ENCODE measurements at regions of chr10 and their contacts with region 1.

Region 1: DNA sequence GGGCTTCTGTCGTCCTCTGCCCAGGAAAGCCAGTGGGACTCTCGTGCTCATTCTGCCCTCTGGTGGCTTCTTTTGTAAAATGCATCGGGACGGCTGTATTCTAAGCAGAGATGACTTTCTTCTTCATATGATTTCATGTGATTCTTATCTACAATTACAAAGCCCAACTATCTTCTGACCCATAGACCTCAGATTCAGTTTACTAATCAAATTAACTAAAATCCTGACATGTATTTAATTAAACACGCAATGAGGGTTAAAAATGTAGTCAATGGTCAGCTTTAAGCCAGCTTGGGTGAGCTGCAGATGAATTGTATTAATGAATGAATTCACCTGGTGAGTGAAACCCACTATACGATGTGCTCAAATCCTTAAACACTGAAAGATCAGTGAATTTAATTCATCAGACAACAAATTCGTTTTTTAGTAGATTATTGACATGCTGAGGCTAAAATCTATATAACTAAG is 117.6 kb upstream of the FAM204A start:
- DNase-seq: peak; percentile 67
- H3K4me3 ChIP-seq: peak overlapping the region in 1 of 4 donors; percentile 23
- H3K27ac ChIP-seq: peak overlapping the region in 3 of 4 donors; percentile 20 to 59 (median 29)
- H3K4me1 ChIP-seq: peaks cover 0 to 16% (median 11%) of the 10 kb centered on the region in 4 donors
- H3K27me3 ChIP-seq: peaks cover 10% of the 10 kb centered on the region
- CTCF ChIP-seq: peak; percentile 65 to 80 (median 72)
- EP300 ChIP-seq: no peak
- POLR2A ChIP-seq: no peak

Region 2: DNA sequence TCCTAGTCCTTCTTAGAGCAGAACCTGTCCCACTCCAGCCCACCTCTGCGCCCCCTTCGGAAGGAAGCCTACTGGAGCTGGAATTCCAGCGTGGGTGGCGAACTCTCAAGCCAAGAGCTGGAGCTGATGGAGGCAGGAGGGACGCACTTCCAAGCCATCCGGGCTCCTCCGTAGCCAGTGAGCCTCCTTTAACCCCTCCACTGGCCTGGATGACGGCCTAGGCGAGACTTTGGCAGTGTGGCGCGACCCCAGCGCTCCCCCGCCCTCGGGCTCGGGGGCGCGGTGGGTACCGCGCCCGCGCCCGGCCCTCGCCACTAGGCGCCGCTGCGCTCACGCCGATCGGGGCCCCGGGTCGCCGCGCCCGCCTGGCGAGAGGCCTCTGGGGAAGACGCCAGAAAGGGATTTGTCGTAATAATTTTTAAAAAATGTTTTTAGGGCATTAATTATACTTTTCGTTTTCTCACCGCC is 922.3 kb before region 1 on chr10:
- in situ Hi-C with region 1: loop called in 1 of 4 experiments (anchors 25 kb)
- intact Hi-C with region 1: no loop called
- DNase-seq: no peak
- H3K4me3 ChIP-seq: peak overlapping the region in 1 of 4 donors; percentile 17
- H3K27ac ChIP-seq: no peak overlapping the region
- H3K4me1 ChIP-seq: peaks cover 14 to 40% (median 28%) of the 10 kb centered on the region in 4 donors
- H3K27me3 ChIP-seq: peaks cover 100% of the 10 kb centered on the region
- CTCF ChIP-seq: peak in 4 of 5 experiments; percentile 20 to 64 (median 52)
- EP300 ChIP-seq: no peak
- POLR2A ChIP-seq: no peak

Region 3: DNA sequence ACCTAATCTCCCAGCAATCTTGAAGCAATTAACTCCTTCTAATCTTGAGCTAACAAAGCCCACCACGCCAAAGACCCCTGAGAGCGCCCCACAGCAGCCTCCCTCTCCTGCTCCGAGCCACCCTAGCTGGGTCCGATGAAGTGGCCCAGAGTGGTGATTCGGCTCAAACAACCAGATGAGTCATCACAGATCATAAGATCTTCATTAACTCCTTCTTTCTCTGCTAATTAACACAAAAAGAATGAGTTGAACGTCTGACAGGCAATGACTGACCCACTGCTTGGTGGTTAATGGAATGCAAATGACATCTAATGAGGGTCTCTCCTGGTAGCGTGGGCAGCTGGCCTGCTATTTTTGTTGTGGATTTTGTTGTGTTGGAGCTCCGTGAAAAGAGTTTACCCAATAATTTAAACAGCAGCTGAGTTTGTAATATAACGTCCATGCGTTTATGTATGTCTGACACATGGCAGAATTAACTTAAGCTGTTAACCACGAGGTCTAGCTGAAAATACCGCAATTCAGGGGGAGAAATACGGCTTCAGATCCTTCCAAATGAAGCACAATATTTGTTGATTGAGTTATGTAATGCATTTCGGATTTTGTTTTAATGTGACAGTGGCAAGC is 574.4 kb before region 1 on chr10:
- in situ Hi-C with region 1: no loop called
- intact Hi-C with region 1: loop called (anchors 5 kb)
- DNase-seq: no peak
- H3K4me3 ChIP-seq: no peak overlapping the region
- H3K27ac ChIP-seq: no peak overlapping the region
- H3K4me1 ChIP-seq: no peaks in the 10 kb centered on the region
- H3K27me3 ChIP-seq: peaks cover 4% of the 10 kb centered on the region
- CTCF ChIP-seq: no peak
- EP300 ChIP-seq: no peak
- POLR2A ChIP-seq: no peak

Region 4: DNA sequence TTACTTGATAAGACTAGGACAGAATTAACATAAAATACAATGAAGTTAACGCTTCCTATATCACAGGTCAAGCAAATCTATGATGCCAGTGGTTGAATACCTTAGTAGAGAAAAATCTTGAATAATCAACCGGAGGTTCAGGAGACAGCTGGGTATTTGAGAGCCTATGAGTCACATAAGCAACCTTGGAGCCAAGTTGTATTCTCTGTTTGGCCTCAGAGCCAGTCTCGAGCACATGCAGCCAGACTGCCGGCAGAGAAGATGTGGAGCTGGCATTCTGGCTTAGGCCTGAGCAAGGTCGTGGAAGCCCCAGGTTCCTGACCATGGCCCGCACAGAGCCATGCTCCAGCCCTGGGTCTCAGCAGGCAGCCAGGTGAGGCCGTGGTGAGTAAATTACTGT is 208.0 kb before region 1 on chr10:
- in situ Hi-C with region 1: no loop called
- intact Hi-C with region 1: no loop called
- DNase-seq: no peak
- H3K4me3 ChIP-seq: no peak overlapping the region
- H3K27ac ChIP-seq: no peak overlapping the region
- H3K4me1 ChIP-seq: no peaks in the 10 kb centered on the region
- H3K27me3 ChIP-seq: peaks cover 14% of the 10 kb centered on the region
- CTCF ChIP-seq: no peak
- EP300 ChIP-seq: no peak
- POLR2A ChIP-seq: no peak

Region 5: GRCh38 chr10:118373786-118374185 is 86.0 kb before region 1 on chr10:
- in situ Hi-C with region 1: loop called in 1 of 4 experiments (anchors 25 kb)
- intact Hi-C with region 1: no loop called
- DNase-seq: no peak
- H3K4me3 ChIP-seq: no peak overlapping the region
- H3K27ac ChIP-seq: no peak overlapping the region
- H3K4me1 ChIP-seq: no peaks in the 10 kb centered on the region
- H3K27me3 ChIP-seq: no peaks in the 10 kb centered on the region
- CTCF ChIP-seq: no peak
- EP300 ChIP-seq: no peak
- POLR2A ChIP-seq: no peak

Measured in transverse colon (tissue), 4 donors.